ENCODE measurements at regions of chr4 and their contacts with region 1.

Region 1: GRCh38 chr4:78168029-78168428 is 110.9 kb downstream of the FRAS1 start:
- H3K4me3 ChIP-seq: no peak overlapping the region
- H3K27ac ChIP-seq: no peak overlapping the region
- H3K4me1 ChIP-seq: no peaks in the 10 kb centered on the region
- CTCF ChIP-seq: no peak

Region 2: GRCh38 chr4:78022517-78022916 is 145.5 kb before region 1 on chr4:
- CTCF ChIA-PET with region 1: no interaction called
- POLR2A ChIA-PET with region 1: no interaction called
- H3K4me3 ChIP-seq: no peak overlapping the region
- H3K27ac ChIP-seq: no peak overlapping the region
- H3K4me1 ChIP-seq: no peaks in the 10 kb centered on the region
- CTCF ChIP-seq: no peak

Region 3: GRCh38 chr4:78379991-78380729 is 212.1 kb after region 1 on chr4:
- CTCF ChIA-PET with region 1: no interaction called
- POLR2A ChIA-PET with region 1: no interaction called
- H3K4me3 ChIP-seq: no peak overlapping the region
- H3K27ac ChIP-seq: no peak overlapping the region
- H3K4me1 ChIP-seq: no peaks in the 10 kb centered on the region
- CTCF ChIP-seq: no peak

Region 4: DNA sequence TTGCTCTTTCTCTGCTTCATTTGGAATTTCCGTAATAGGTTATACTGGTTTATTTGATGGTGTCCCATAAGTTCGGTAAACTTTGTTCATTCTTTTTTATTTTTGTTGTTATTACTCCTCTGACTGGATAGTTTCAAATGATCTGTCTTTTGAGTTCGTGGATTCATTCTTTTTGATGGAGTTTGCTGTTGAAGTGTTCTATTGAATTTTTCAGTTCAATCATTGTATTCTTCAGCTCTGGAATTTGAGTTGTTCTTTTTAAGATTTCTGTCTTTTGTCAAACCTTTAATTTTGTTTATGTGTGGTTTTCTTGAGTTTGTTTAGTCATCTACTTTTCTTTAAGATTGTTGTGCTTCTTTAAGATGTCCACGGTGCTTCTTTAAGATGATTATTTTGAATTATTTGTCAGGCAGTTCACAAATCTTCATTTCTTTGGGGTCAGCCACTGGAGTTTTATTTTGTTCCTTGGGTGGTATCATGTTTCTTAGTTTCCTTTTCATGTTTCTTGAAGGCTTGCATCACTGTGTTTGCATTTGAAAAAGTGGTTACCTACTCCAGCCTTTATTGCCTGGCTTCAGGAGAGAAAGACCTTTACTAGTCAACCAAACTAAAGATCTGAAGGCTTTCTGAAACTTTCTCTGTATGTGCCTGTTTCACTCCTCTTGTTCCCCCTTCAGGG is 228.7 kb after region 1 on chr4:
- CTCF ChIA-PET with region 1: interaction called, 11 read pairs
- POLR2A ChIA-PET with region 1: no interaction called
- H3K4me3 ChIP-seq: no peak overlapping the region
- H3K27ac ChIP-seq: no peak overlapping the region
- H3K4me1 ChIP-seq: peaks cover 3% of the 10 kb centered on the region; the same call in 1 of the 2 replicates
- CTCF ChIP-seq: no peak

Measured in HEK293 (cell line).